ENCODE measurements at regions of chr1 and their contacts with region 1.

Region 1: DNA sequence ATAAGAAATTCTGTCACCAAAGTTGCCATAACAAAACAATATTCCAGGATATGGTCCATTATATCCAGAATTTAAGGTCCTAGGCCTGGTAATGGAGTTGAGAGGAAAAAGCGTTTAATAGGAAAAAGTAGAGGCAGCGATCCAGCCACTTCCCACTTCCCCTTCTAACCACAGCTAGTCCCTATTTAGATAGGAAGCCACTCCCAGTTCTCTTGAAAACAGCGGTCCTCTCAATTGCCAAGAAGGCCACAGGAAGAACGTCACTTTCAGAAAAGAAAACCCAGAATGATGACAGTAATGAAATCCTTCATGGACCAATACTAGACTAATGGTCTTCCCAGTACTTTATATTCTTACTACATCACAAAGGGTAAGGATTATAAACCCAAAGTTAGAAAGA is 38.6 kb downstream of the ABL2 start:
- DNase-seq: no peak

Region 2: DNA sequence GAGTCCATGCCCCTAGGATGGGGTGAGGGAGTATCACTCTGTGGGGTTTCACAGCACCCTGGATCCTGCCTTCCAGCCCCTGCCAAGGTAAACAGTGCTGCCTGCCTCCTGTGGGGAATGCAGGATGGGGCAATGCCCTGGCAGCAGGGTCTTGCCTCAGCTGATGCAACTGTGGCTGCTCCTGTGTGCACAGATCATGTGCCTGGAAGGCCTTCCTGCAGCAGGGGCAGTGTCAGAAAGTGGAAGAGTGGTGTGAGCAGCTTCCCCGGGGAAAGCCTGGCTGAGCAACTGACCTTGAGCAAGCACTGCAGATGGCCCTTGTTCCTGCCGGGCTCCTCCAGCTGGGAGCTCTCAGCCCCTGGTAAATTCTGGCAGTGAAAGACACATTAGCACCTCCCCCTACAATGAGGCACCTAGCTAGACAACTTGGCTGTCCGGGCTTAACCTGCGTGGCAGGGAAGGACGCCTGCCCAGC is 99.1 kb before region 1 on chr1:
- intact Hi-C with region 1: no loop called
- DNase-seq: no peak

Region 3: GRCh38 chr1:179121159-179121938 is 69.5 kb before region 1 on chr1:
- intact Hi-C with region 1: loop called (anchors 5 to 10 kb)
- DNase-seq: no peak

Measured in posterior vena cava (tissue), 2 donors.